ENCODE measurements at regions of chr6 and their contacts with region 1.

Region 1: GRCh38 chr6:162736961-162737360 is 9.2 kb downstream of the PACRG start:
- DNase-seq: no peak
- ATAC-seq: peak; percentile 52; the same call in 2 of the 3 replicates
- H3K4me3 ChIP-seq: no peak overlapping the region
- H3K27ac ChIP-seq: no peak overlapping the region
- H3K4me1 ChIP-seq: no peaks in the 10 kb centered on the region
- H3K27me3 ChIP-seq: no peaks in the 10 kb centered on the region
- CTCF ChIP-seq: peak; percentile 37
- EP300 ChIP-seq: no peak
- POLR2A ChIP-seq: no peak
- RAD21 ChIP-seq: no peak

Region 2: GRCh38 chr6:162442687-162443086 is 294.3 kb before region 1 on chr6:
- CTCF ChIA-PET with region 1: no interaction called
- POLR2A ChIA-PET with region 1: no interaction called
- in situ Hi-C with region 1: no loop called
- intact Hi-C with region 1: loop called (anchors 2 kb)
- DNase-seq: peak; percentile 36
- ATAC-seq: peak; percentile 99
- H3K4me3 ChIP-seq: no peak overlapping the region
- H3K27ac ChIP-seq: no peak overlapping the region
- H3K4me1 ChIP-seq: no peaks in the 10 kb centered on the region
- H3K27me3 ChIP-seq: no peaks in the 10 kb centered on the region
- CTCF ChIP-seq: peak; percentile 78
- EP300 ChIP-seq: no peak
- POLR2A ChIP-seq: no peak
- RAD21 ChIP-seq: peak; percentile 60

Region 3: DNA sequence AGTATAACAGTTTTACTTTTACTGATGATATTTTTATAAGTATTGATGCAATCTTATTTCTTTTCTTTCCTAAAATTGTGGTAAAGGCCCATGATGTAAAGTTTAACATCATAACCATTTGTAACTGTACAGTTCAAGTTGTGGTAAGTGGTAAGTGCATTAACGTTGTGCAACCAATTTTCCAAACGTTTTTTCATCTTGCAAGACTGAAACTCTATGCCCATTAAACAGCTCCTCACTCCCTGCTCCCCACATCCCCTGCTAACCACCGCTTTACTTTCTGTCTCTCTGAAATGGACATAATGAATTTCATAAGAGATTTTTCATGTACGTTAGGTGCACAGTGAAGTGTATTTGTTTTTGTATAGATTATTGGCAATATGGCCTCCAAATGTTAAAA is 96.8 kb after region 1 on chr6:
- CTCF ChIA-PET with region 1: no interaction called
- POLR2A ChIA-PET with region 1: no interaction called
- in situ Hi-C with region 1: no loop called
- intact Hi-C with region 1: no loop called
- DNase-seq: no peak
- ATAC-seq: no peak
- H3K4me3 ChIP-seq: no peak overlapping the region
- H3K27ac ChIP-seq: no peak overlapping the region
- H3K4me1 ChIP-seq: no peaks in the 10 kb centered on the region
- H3K27me3 ChIP-seq: no peaks in the 10 kb centered on the region
- CTCF ChIP-seq: no peak
- EP300 ChIP-seq: no peak
- POLR2A ChIP-seq: no peak
- RAD21 ChIP-seq: no peak